GM10248 (cell line): ENCODE measurements at regions of chr20 and their contacts with region 1.

Region 1: GRCh38 chr20:4956200-4956810 is 45.0 kb downstream of the SLC23A2 start:
- DNase-seq: peak; percentile 53
- CTCF ChIP-seq: peak; percentile 69

Region 2: DNA sequence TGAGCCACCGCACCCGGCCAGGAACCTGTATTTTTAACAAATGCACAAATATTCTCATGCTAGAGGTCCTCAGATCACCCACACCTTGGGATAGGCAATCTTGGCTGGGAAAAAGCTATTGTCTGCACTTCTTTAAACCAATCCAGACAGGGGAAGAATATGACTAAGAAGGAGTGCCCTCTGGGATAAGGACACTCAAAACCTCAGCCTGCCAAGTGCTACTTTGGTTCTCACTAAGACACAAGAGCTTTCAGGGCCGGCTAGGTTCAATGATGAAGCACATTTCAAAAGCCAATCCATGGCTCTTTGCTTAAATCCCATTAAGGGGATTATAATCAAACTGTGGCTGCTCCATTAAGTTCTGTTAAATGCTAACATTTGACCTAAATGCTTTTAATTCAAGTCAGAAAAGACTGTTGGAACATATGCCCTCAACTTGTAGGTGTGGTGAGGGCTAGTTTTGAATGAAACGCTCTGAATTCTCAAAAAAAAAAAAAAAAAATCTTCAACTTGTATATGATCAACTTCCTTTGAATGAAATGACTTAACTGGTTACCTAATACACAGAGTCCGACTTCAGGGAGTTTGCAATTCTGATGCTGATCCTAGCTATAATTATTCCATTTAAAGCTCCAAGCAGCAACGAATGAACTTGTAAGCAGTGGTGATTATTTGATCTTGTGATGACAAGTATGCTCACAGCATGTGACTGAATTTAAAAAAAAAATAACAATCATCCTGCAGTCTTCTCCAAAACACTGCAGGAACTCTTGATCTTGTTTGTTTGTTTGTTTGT is 11.6 kb before region 1 on chr20:
- CTCF ChIA-PET with region 1: interaction called, 20 read pairs
- POLR2A ChIA-PET with region 1: no interaction called
- DNase-seq: no peak
- CTCF ChIP-seq: no peak

Region 3: GRCh38 chr20:4966826-4967751 is 10.8 kb after region 1 on chr20:
- CTCF ChIA-PET with region 1: interaction called, 42 read pairs
- POLR2A ChIA-PET with region 1: interaction called, 3 read pairs
- DNase-seq: no peak
- CTCF ChIP-seq: no peak